ENCODE measurements at regions of chr6 and their contacts with region 1.

Region 1: DNA sequence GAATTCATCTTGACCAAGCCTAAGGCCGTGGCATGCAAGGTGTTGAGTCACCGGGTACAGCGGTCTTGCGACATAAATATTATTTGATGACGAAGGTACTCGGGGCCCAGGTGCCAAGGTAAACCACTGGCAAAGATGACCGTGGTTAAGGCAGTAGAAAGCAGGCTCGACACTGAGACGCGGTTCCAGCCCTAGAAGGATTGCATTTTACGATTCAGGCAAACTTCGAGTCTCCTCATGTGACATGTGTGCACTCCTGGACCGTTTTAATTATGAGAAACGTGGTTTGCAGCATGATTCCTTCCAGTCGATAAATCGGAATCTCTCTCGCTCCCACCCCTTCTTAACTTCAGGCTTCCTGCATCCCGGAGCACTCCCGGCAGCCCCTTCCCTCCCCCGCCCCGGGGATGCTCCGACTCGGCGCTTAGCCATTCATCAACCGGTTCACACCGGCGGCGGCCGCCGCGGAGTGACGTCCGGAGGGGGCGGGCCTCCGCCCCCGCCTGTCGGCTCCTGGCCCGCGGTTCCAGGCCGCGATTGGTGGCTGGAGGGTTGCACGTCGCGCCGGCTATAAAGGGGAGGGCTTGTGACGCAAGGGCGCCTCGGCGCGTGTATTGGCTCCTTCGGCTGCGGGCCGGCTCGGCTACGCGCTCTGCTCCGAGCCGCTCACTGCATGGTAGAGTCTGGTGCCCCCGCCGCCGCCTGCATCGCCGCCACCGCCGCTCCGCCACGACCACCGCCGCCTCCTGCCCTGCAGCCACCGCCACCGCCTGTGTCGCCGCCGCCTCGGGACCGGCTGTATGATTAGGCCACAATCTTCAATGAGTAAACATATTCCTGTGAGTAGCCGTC is at the starts of genes LOC128125822 and PTP4A1:
- DNase-seq: peak; percentile 97 to 99 (median 98)
- ATAC-seq: peak; percentile 68 to 86 (median 82)
- H3K4me3 ChIP-seq: peak within 1 kb of the TSS; percentile 77 to 98 (median 86)
- H3K27ac ChIP-seq: peak within 1 kb of the TSS; percentile 100
- H3K4me1 ChIP-seq: peaks cover 22 to 29% (median 29%) of the 10 kb centered on the region in 3 donors
- H3K27me3 ChIP-seq: no peaks in the 10 kb centered on the region
- CTCF ChIP-seq: no peak
- total RNA-seq, gene PTP4A1: 24.8 to 77.8 (median 40.7) TPM

Region 2: GRCh38 chr6:63527658-63528514 is 44.2 kb before region 1 on chr6:
- intact Hi-C with region 1: loop called in 1 of 3 experiments (anchors 10 kb)
- DNase-seq: peak in 4 of 6 donors; percentile 66 to 90 (median 71)
- ATAC-seq: peak; percentile 92 to 97 (median 96)
- H3K4me3 ChIP-seq: peak overlapping the region in 1 of 4 donors; percentile 8
- H3K27ac ChIP-seq: peak overlapping the region in 3 of 4 donors; percentile 1 to 84 (median 70)
- H3K4me1 ChIP-seq: peaks cover 5 to 21% (median 7%) of the 10 kb centered on the region in 3 donors
- H3K27me3 ChIP-seq: no peaks in the 10 kb centered on the region
- CTCF ChIP-seq: no peak

Region 3: GRCh38 chr6:63904650-63905248 is 332.6 kb after region 1 on chr6:
- intact Hi-C with region 1: no loop called
- DNase-seq: no peak
- ATAC-seq: peak in 1 of 4 donors; percentile 44
- H3K4me3 ChIP-seq: no peak overlapping the region
- H3K27ac ChIP-seq: no peak overlapping the region
- H3K4me1 ChIP-seq: no peaks in the 10 kb centered on the region
- H3K27me3 ChIP-seq: no peaks in the 10 kb centered on the region
- CTCF ChIP-seq: no peak